ENCODE measurements at regions of chr14 and their contacts with region 1.

Region 1: DNA sequence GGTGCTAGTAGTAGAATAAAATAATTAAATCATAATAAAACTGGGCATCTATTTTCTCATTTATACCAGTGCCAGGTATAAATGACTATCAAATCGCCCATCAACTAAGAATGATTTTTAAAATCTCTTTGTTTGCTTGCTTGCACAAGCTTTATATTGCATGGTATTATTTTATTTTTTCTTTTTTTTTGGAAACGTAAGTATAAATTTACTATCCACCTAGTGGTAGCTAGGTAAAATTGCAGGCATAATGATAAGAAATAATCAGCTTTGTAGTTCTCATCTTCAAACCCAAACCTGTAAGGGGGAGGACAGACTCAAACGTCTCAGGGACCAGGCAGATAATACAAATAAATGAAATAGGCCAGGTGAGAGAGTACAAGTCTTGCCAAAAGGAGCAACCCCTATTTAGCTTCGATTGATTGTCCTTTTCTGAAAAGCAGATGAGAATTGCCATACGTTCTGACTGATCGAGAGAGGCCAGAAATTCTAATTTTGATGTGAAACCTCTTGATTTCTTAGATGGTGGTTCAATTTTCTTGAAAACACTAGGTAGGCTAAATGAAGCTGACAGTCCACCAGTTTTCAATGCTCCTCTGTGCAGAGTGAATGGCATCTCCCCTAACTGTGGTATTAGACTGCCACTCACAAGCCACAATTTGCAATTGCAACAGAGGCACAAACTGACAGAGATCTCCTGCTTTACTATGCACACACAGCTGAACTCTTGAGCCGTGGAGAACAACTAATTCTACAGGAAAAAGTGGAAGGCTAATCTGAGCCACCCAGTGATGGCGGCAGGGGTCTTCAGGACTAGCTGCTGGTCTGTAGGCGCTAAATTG is 189.3 kb downstream of the DACT1 start:
- DNase-seq: no peak
- ATAC-seq: no peak
- H3K4me3 ChIP-seq: no peak overlapping the region
- H3K27ac ChIP-seq: no peak overlapping the region
- H3K4me1 ChIP-seq: no peaks in the 10 kb centered on the region
- H3K27me3 ChIP-seq: peaks cover 0 to 3% (median 0%) of the 10 kb centered on the region in 7 donors
- CTCF ChIP-seq: peak in 2 of 9 donors; percentile 12 to 15

Region 2: DNA sequence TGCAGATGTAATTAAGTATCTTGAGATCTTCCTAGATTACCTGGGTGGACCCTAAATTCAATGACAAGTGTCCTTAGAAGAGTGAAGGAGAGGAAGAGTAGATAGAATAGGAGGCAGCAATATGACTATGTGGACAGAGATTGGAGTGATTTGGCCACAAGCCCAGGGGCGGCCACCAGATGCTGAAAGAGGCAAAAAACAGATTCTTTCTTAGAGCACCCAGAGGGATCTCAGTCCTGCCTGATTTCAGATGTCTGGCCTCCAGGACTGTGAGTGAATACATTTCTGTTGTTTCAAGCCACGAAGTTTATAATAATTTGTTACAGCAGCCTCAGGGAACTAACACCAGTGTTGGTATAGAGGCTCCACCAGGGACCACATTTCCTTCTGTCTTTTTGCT is 122.0 kb before region 1 on chr14:
- intact Hi-C with region 1: loop called in 1 of 10 experiments (anchors 10 kb)
- DNase-seq: peak in 1 of 2 donors; percentile 15
- ATAC-seq: peak in 1 of 8 donors; percentile 31
- H3K4me3 ChIP-seq: no peak overlapping the region
- H3K27ac ChIP-seq: no peak overlapping the region
- H3K4me1 ChIP-seq: peaks cover 0 to 17% (median 0%) of the 10 kb centered on the region in 9 donors
- H3K27me3 ChIP-seq: peaks cover 0 to 4% (median 0%) of the 10 kb centered on the region in 7 donors
- CTCF ChIP-seq: no peak